Ascending aorta (tissue), 2 donors: ENCODE measurements at regions of chr4 and their contacts with region 1.

Region 1: GRCh38 chr4:93791570-93792195 is 36.9 kb upstream of the ATOH1 start:
- DNase-seq: no peak
- H3K4me3 ChIP-seq: no peak overlapping the region
- H3K27ac ChIP-seq: no peak overlapping the region
- H3K4me1 ChIP-seq: no peaks in the 10 kb centered on the region
- H3K27me3 ChIP-seq: no peaks in the 10 kb centered on the region
- CTCF ChIP-seq: peak; percentile 30 to 64 (median 61)

Region 2: GRCh38 chr4:94127707-94128328 is 336.1 kb after region 1 on chr4:
- intact Hi-C with region 1: loop called (anchors 10 kb)
- DNase-seq: no peak
- H3K4me3 ChIP-seq: no peak overlapping the region
- H3K27ac ChIP-seq: no peak overlapping the region
- H3K4me1 ChIP-seq: no peaks in the 10 kb centered on the region
- H3K27me3 ChIP-seq: no peaks in the 10 kb centered on the region
- CTCF ChIP-seq: peak in 2 of 3 experiments; percentile 13 to 27